GM12878 (cell line): ENCODE measurements at regions of chr6 and their contacts with region 1.

Region 1: GRCh38 chr6:90393232-90393884 is 96.7 kb upstream of the BACH2 start:
- DNase-seq: no peak
- ATAC-seq: peak; percentile 87
- H3K4me3 ChIP-seq: no peak overlapping the region
- H3K27ac ChIP-seq: no peak overlapping the region
- H3K4me1 ChIP-seq: no peaks in the 10 kb centered on the region
- H3K27me3 ChIP-seq: peaks cover 0 to 7% of the 10 kb centered on the region in 2 experiments; a peak in 2 of 4 replicates
- CTCF ChIP-seq: peak; percentile 65 to 78 (median 68)
- EP300 ChIP-seq: no peak
- POLR2A ChIP-seq: no peak
- RAD21 ChIP-seq: peak; percentile 75

Region 2: DNA sequence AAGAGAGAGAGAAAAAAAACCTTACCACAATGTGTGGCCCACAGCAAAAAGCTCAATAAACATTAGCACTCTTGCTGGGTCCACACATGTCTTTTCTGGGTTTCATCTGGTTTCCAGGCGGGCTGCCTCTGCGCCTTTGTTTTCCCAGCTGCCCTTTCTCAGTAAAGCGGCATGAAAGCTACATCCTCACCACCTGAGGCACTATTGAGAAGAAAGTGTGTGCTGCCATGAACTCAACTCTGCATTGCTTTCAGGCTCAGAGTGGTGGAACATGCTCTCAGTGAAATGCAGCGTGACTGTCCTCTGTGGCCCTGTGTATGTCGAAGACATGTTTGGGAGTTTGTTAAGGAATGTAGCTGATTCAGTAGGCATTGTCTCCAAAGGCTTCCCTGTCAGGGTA is 857.1 kb before region 1 on chr6:
- CTCF ChIA-PET with region 1: no interaction called
- POLR2A ChIA-PET with region 1: no interaction called
- RAD21 ChIA-PET with region 1: no interaction called
- SMC1A ChIA-PET with region 1: no interaction called
- in situ Hi-C with region 1: no loop called
- intact Hi-C with region 1: no loop called
- DNase-seq: no peak
- ATAC-seq: peak; percentile 26; the same call in 1 of the 3 replicates
- H3K4me3 ChIP-seq: no peak overlapping the region
- H3K27ac ChIP-seq: no peak overlapping the region
- H3K4me1 ChIP-seq: no peaks in the 10 kb centered on the region
- H3K27me3 ChIP-seq: no peaks in the 10 kb centered on the region
- CTCF ChIP-seq: no peak
- EP300 ChIP-seq: no peak
- POLR2A ChIP-seq: no peak
- RAD21 ChIP-seq: no peak

Region 3: DNA sequence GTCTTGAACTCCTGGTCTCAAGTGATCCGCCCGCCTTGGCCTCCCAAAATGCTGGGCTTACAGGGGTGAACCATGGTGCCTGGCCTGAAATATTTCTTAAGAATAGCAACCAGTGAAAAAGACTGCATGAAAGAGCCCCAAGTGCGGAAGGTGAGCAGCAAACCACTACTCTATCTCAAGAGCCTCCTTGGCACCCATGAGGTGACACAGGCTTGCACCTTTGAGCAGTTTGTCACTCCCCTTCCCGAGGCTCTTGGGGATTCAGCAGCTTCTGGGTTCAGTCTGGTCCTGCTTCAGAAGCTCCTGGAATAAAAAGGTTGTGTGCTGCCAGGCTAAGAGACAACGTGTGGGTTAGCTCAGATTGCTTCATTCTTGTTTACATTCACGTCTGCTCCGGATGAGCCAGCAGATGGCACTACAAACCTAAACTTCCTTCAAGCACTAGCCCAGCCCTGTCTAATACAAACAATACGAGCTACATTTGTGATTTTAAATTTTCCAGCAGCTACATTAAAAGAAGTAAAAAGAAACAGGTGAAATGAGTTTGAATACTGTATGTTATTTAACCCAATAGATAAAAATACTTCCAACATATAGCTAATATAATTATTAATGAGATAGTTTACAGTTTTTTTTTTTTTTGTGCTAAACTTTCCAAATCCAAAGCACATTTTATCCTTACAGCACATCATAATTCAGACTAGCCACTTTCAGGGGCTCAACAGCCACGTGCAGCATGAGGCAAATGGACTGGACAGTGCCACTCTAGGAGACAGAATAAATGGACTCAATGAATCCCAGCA is 452.9 kb before region 1 on chr6:
- CTCF ChIA-PET with region 1: interaction called, 40 read pairs
- POLR2A ChIA-PET with region 1: no interaction called
- RAD21 ChIA-PET with region 1: interaction called, 25 read pairs
- SMC1A ChIA-PET with region 1: interaction called, 11 read pairs
- in situ Hi-C with region 1: loop called (anchors 10 kb)
- intact Hi-C with region 1: loop called (anchors 1 kb)
- DNase-seq: peak; percentile 21
- ATAC-seq: peak; percentile 99
- H3K4me3 ChIP-seq: no peak overlapping the region
- H3K27ac ChIP-seq: no peak overlapping the region
- H3K4me1 ChIP-seq: no peaks in the 10 kb centered on the region
- H3K27me3 ChIP-seq: no peaks in the 10 kb centered on the region; a peak in 3 of 4 replicates
- CTCF ChIP-seq: peak; percentile 64 to 83 (median 71)
- EP300 ChIP-seq: no peak
- POLR2A ChIP-seq: no peak
- RAD21 ChIP-seq: peak; percentile 92

Region 4: GRCh38 chr6:89954721-89955149 is 438.6 kb before region 1 on chr6:
- CTCF ChIA-PET with region 1: no interaction called
- POLR2A ChIA-PET with region 1: no interaction called
- RAD21 ChIA-PET with region 1: no interaction called
- SMC1A ChIA-PET with region 1: no interaction called
- in situ Hi-C with region 1: loop called (anchors 10 kb)
- intact Hi-C with region 1: loop called (anchors 5 kb)
- DNase-seq: no peak
- ATAC-seq: no peak
- H3K4me3 ChIP-seq: no peak overlapping the region
- H3K27ac ChIP-seq: no peak overlapping the region
- H3K4me1 ChIP-seq: no peaks in the 10 kb centered on the region
- H3K27me3 ChIP-seq: peaks cover 0 to 3% of the 10 kb centered on the region in 2 experiments; a peak in 2 of 4 replicates
- CTCF ChIP-seq: no peak
- EP300 ChIP-seq: no peak
- POLR2A ChIP-seq: no peak
- RAD21 ChIP-seq: no peak

Region 5: GRCh38 chr6:89970609-89971337 is 422.6 kb before region 1 on chr6:
- CTCF ChIA-PET with region 1: no interaction called
- POLR2A ChIA-PET with region 1: interaction called, 9 read pairs
- RAD21 ChIA-PET with region 1: no interaction called
- SMC1A ChIA-PET with region 1: interaction called, 3 read pairs
- in situ Hi-C with region 1: no loop called
- intact Hi-C with region 1: loop called (anchors 1 kb)
- DNase-seq: no peak
- ATAC-seq: peak; percentile 52
- H3K4me3 ChIP-seq: no peak overlapping the region
- H3K27ac ChIP-seq: no peak overlapping the region
- H3K4me1 ChIP-seq: no peaks in the 10 kb centered on the region
- H3K27me3 ChIP-seq: peaks cover 0 to 1% of the 10 kb centered on the region in 2 experiments
- CTCF ChIP-seq: peak; percentile 22 to 52 (median 22); a peak in 4 of 6 replicates
- EP300 ChIP-seq: no peak
- POLR2A ChIP-seq: no peak
- RAD21 ChIP-seq: peak; percentile 59

Region 6: GRCh38 chr6:90319044-90319443 is 74.3 kb before region 1 on chr6:
- CTCF ChIA-PET with region 1: no interaction called
- POLR2A ChIA-PET with region 1: no interaction called
- RAD21 ChIA-PET with region 1: no interaction called
- SMC1A ChIA-PET with region 1: no interaction called
- in situ Hi-C with region 1: no loop called
- intact Hi-C with region 1: no loop called
- DNase-seq: no peak
- ATAC-seq: no peak
- H3K4me3 ChIP-seq: no peak overlapping the region
- H3K27ac ChIP-seq: no peak overlapping the region
- H3K4me1 ChIP-seq: no peaks in the 10 kb centered on the region
- H3K27me3 ChIP-seq: peaks cover 2 to 3% of the 10 kb centered on the region in 2 experiments; a peak in 2 of 4 replicates
- CTCF ChIP-seq: no peak
- EP300 ChIP-seq: no peak
- POLR2A ChIP-seq: no peak
- RAD21 ChIP-seq: no peak

Region 7: GRCh38 chr6:90369024-90369519 is 24.3 kb before region 1 on chr6:
- CTCF ChIA-PET with region 1: interaction called, 16 read pairs
- POLR2A ChIA-PET with region 1: no interaction called
- RAD21 ChIA-PET with region 1: no interaction called
- SMC1A ChIA-PET with region 1: interaction called, 3 read pairs
- in situ Hi-C with region 1: no loop called
- intact Hi-C with region 1: no loop called
- DNase-seq: peak; percentile 90
- ATAC-seq: peak; percentile 99
- H3K4me3 ChIP-seq: no peak overlapping the region
- H3K27ac ChIP-seq: no peak overlapping the region
- H3K4me1 ChIP-seq: peaks cover 13% of the 10 kb centered on the region
- H3K27me3 ChIP-seq: peaks cover 0 to 3% of the 10 kb centered on the region in 2 experiments; a peak in 2 of 4 replicates
- CTCF ChIP-seq: no peak
- EP300 ChIP-seq: peak; percentile 87 to 94
- POLR2A ChIP-seq: no peak
- RAD21 ChIP-seq: no peak